ENCODE measurements at regions of chr16 and their contacts with region 1.

Region 1: GRCh38 chr16:84726079-84726668 is 26.4 kb downstream of the USP10 start:
- DNase-seq: peak; percentile 85 to 94 (median 92)
- H3K4me3 ChIP-seq: peak overlapping the region in 1 of 3 donors; percentile 31
- H3K27ac ChIP-seq: peak overlapping the region in 1 of 2 donors; percentile 52
- H3K4me1 ChIP-seq: peaks cover 9 to 38% (median 22%) of the 10 kb centered on the region in 3 donors
- H3K27me3 ChIP-seq: no peaks in the 10 kb centered on the region
- CTCF ChIP-seq: peak; percentile 92

Region 2: DNA sequence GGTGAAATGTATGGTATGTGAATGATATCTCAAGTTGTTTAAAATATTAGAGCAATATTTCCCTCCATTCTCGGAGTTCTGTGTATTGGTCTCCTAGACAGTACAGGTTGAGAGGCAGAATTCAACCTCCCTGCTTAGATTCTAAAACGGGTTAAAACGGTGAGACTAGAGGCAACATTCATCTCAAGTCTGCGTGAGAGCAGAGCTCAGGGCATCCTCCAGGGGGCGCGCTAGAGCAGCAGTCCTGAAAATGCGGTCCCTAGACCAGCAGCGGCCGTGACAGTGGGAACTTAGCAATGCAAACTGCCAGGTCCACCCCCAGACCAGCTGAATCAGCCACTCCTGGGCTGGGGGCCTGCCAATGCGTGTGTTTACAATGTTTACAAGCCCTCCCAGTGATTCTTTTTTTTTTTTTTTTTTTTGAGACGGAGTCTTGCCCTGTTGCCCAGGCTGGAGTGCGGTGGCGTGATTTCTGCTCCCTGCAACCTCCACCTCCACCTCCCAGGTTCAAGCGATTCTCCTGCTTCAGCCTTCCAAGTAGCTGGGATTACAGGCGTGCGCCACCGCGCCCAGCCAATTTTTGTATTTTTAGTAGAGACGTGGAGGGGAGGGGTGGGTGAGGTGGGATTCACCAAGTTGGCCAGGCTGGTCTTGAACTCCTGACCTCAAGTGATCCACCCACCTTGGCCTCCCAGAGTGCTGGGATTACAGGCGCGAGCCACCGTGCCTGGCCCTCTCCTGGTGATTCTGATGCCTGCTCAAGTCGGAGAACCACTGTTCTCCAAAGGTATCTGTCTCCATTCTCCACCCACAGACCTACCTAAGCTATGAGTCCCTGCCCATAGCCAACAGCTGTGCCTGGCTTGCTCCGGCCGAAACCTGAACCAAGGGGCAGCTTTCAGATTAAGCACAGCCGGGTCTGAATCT is 53.6 kb before region 1 on chr16:
- intact Hi-C with region 1: loop called (anchors 10 kb)
- DNase-seq: peak; percentile 60 to 84 (median 74)
- H3K4me3 ChIP-seq: no peak overlapping the region
- H3K27ac ChIP-seq: no peak overlapping the region
- H3K4me1 ChIP-seq: no peaks in the 10 kb centered on the region
- H3K27me3 ChIP-seq: no peaks in the 10 kb centered on the region
- CTCF ChIP-seq: peak; percentile 89

Measured in kidney (tissue), 22 donors.